Activated naive CD4-positive, alpha-beta T cell treated with anti-CD3 and anti-CD28 coated beads for 36 hours (primary cell): ENCODE measurements at regions of chr5 and their contacts with region 1.

Region 1: DNA sequence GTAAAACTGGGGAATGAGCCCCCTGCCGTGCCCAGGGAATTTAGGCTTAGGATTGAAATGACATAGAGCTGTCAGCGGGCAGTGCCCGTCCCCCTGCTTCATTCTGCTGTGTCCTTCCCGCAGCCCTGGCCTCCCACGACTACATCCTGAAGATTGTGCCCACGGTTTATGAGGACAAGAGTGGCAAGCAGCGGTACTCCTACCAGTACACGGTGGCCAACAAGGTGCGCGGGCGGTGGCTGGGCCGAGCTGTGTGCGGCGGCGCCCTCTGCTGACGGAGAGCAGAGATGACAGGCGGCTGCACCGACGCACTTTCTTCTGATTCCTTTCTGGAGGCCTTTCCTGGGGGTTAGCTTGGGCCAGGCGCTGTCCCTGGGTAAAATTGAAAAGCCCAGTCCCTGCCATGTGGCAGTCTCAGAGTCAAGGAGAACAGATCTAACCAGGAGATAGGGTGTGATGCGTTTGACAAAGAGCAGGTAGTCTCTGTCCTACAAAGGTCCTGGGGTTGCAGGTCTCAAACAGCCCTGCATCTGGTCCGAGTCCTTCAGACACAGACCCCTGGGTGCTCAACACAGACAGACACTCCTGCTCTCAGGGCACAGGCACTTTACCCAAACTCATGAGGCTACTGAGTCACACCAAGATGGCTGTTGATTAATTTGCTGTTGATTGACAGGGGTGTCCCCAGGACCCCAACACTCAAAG is 26.8 kb upstream of the RPL26L1 start:
- DNase-seq: peak; percentile 79
- H3K4me3 Mint-ChIP-seq: no peak overlapping the region
- H3K27ac Mint-ChIP-seq: no peak overlapping the region
- H3K4me1 Mint-ChIP-seq: no peaks in the 10 kb centered on the region
- H3K27me3 Mint-ChIP-seq: no peaks in the 10 kb centered on the region

Region 2: DNA sequence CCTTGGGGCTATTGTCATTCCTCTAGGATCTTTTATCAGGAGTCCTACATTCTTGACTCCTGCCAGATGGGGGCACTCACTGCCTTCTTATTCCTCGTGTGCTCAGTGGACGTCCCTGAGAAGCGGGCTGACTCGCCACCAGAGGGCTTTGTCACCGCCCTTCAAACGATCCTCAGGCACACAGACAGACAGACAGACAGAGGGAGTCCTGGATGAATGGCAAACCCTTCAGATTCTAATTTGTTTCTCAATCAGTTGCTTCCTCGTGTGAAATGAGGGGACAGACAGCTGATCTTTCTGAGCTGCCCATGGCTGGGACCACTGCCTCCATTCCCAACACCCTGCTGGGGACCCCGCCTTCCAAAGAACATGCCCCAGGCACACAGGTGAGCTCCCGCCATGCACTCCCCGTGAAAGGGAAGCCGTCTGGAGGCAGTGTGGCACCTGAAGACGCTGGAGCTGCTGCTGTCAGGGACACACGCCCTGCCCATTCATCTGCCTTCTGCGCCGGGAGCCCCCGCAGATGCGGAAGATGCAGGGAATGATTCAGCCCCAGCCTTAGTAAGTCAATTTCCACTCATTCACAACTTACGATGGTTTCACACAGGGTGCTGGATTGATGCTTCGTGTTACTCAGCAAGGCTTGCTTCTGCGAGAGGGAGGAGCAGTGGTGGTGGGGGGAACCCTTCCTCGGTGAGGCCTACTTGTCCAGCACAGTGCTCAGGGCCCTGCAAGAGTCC is 453.3 kb before region 1 on chr5:
- CTCF ChIA-PET with region 1: no interaction called
- intact Hi-C with region 1: loop called (anchors 10 kb)
- DNase-seq: peak; percentile 83
- H3K4me3 Mint-ChIP-seq: no peak overlapping the region
- H3K27ac Mint-ChIP-seq: no peak overlapping the region
- H3K4me1 Mint-ChIP-seq: no peaks in the 10 kb centered on the region
- H3K27me3 Mint-ChIP-seq: no peaks in the 10 kb centered on the region

Region 3: DNA sequence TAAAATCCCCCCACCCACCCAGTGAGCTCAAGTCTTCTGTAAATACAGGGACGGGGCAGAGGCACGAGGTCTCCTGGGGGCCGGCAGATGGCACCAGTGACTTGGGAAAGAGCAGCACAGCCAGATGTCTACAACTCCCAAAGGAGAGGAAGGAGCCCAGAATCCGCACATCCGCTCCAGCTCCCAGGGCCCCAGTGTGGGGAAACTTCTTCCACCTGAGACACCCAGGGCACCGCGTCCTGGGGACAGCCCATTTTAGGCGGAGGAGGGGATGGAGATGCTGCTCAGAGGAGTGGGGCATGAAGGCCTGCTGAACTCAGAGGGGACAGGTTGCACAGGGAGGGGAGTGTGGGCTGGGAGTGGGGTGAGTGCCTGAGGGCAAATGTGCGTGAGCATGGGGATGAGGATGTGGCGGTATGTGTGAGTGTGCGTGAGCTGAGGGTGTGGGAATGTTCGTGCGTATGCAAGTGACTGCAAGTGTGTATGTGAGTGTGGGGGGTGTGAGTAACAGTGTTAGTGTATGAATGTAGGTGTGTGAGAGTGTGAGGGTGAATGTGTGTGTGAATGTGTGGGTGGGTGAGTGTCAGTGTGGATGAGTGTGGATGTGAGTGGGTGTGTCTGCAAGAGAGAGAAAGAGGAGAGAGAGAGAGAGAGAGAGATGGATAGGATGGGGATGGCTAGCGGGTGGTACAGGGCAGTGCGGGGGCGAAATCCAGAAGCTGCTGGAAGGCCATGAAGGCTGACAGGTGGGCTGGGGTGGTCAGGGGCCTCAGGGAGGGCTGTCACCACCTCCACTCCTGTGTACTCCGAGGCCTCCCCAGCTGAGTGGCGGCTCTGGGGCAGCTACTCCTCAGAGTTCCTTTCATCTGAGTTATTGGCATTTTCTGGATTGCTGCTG is 224.9 kb before region 1 on chr5:
- CTCF ChIA-PET with region 1: interaction called, 274 read pairs
- intact Hi-C with region 1: no loop called
- DNase-seq: peak; percentile 33
- H3K4me3 Mint-ChIP-seq: no peak overlapping the region
- H3K27ac Mint-ChIP-seq: no peak overlapping the region
- H3K4me1 Mint-ChIP-seq: no peaks in the 10 kb centered on the region
- H3K27me3 Mint-ChIP-seq: peaks cover 20% of the 10 kb centered on the region

Region 4: DNA sequence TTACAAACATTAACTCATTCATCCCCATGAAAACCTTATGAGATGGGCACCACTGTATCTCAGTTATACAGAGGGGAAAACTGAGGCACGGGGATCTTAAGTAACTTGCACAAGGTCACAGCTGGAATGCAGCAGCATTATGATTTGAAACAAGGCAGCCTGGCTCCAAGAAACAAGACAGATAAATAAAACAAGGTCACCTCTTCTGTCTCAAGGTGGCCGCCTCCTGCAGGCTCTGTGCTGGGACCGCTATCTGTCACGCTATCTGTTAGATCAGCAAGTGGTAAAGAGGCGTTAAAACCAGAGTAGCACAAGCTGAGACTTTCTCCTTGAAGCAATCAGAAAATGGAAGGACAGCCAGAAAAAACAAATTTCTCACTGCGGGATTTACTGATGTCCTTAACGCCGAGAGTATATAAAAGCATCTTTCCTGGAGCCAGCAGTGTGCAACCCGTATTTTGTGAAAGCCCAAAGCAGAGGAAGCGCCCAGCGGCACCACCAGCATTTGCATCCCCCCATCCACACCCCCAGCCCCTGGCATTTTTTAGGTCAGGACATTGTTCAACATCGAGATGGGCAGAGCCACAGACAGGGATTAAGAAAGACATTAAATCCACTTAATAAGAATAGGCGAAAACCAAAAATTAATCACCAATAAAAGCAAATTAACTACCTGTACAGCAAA is 210.2 kb before region 1 on chr5:
- CTCF ChIA-PET with region 1: interaction called, 40 read pairs
- intact Hi-C with region 1: no loop called
- DNase-seq: no peak
- H3K4me3 Mint-ChIP-seq: no peak overlapping the region
- H3K27ac Mint-ChIP-seq: no peak overlapping the region
- H3K4me1 Mint-ChIP-seq: peaks cover 5% of the 10 kb centered on the region
- H3K27me3 Mint-ChIP-seq: no peaks in the 10 kb centered on the region